Prostate gland (tissue), 2 donors: ENCODE measurements at regions of chr16 and their contacts with region 1.

Region 1: DNA sequence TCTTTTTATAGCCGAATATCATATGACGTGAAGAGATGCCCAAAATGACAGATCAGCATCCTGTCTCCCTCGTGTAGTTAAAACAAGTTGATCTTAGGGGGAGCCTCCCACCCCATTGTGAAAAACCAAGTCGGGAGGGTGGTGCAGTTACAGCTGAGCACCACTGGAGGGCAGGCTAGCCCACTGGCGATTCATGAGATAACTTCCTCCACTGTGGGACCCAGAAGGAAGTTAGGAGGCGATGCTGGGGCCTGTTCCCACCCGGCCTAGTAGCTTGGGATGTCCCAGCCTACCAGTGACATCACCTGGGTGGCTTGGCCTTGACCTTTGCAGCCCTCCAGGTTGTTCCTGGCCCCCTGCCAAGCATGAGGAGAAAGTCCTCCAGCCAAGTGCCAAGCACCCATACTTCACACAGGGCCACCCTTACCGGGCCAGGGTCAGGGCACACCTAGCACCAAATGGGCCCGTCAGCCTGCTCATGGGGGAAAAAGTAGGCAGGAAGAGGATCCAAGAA is 8.1 kb upstream of the CPNE2 start:
- DNase-seq: peak; percentile 61
- H3K4me3 ChIP-seq: no peak overlapping the region
- H3K27ac ChIP-seq: no peak overlapping the region
- H3K4me1 ChIP-seq: no peaks in the 10 kb centered on the region
- H3K27me3 ChIP-seq: no peaks in the 10 kb centered on the region
- CTCF ChIP-seq: peak; percentile 91 to 97 (median 94)
- POLR2A ChIP-seq: no peak

Region 2: DNA sequence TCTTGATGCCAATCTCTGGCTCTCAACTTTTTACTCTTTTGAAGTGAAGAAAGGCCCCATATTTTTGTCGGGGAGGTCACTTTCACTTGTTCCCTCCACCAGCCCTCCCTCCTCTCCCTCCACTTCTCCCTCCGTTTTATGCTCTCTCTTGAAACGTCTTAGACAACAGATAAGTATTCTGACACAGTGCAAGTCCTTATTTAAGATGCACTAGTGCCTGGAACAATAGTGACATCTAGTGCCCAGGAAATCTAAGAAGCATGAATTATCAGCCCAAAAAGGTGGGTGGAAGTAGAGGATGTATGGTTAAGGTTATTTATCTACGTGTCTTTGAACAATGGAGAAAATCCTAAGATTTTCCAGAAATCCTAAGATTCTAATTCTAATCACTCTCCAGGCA is 83.6 kb after region 1 on chr16:
- intact Hi-C with region 1: loop called (anchors 1 kb)
- DNase-seq: peak; percentile 33
- H3K4me3 ChIP-seq: no peak overlapping the region
- H3K27ac ChIP-seq: no peak overlapping the region
- H3K4me1 ChIP-seq: peaks cover 7% of the 10 kb centered on the region
- H3K27me3 ChIP-seq: no peaks in the 10 kb centered on the region
- CTCF ChIP-seq: peak; percentile 29 to 78 (median 62)
- POLR2A ChIP-seq: no peak